ENCODE measurements at regions of chr16 and their contacts with region 1.

Region 1: DNA sequence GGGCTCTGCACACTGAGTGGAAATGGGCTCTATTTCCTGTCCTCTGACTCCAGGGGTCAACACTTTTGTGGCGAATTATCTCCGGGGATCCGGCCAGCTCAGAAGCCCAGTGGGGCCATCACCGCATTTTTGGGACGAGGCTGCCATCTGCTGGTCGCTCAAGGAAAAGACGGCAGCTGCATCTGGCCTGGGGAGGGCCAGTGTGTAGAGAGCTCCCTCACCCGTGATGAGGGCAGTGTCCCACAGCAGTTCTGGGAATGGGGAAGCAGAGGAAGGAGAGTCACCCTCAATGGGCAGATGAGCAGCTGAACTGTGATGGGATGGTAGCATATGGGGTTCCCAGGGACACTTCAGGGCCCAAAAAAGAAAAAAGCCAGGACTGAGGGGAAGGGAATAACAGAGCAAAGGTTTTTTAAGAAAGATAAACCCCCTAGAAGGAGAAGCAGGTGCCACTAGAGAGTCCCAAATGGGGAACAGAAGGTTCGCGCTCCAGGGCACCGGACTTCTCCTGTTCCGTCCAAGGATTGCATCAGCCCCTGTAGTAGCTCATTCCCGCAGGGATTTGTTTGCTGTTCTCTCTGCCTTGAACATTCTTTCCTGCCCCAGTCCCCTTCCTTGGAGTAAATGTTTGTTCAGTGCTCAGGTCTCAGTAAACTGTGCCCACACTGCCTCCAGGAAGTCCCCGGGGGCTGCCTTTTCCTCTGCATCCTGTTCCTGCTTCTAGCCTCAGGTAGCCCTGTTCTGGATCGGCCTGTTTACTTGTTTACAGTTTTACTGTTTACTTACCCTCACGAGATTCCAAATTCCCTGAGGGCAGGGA is 9.3 kb upstream of the ABCC12 start:
- DNase-seq: peak; percentile 75
- H3K4me3 ChIP-seq: no peak overlapping the region
- H3K27ac ChIP-seq: no peak overlapping the region
- H3K4me1 ChIP-seq: no peaks in the 10 kb centered on the region
- H3K27me3 ChIP-seq: no peaks in the 10 kb centered on the region

Region 2: DNA sequence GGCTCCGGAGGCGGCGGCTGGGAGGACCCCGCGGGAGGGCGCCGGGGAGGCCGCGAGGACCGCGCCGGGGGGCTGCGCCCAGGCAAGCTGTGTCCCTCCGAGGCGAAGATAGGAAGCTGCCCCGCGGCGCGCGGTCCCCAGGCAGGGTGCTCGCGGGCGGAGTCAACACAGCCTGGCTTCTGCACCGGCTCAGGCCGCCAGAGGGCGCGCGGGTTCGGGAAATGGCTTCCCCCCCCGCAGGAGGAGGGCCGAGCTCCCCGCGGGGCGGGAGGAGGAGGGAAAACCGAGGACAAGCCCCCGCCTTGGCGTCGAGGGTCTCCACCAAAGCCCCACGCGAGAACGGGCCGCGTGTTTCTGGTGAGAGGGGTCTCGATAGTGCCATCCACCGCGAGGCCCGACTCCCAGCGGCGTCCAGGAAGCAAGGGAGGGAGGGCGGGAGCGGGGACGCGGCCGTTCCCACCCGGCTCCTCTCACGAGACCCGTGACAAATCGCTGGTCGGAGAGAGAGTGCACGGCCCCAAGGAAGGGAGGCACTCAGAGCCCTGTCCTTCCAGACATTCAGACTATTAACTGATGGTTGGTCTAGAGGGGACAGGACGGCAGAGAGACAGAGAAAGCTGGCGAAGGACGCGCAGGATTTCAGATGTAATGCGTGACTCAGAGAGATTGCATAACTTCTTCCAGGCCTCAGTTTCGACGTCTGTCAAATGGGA is 1127.2 kb before region 1 on chr16:
- in situ Hi-C with region 1: loop called (anchors 10 kb)
- DNase-seq: peak; percentile 90
- H3K4me3 ChIP-seq: peak overlapping the region; percentile 75
- H3K27ac ChIP-seq: no peak overlapping the region
- H3K4me1 ChIP-seq: no peaks in the 10 kb centered on the region
- H3K27me3 ChIP-seq: no peaks in the 10 kb centered on the region

Region 3: DNA sequence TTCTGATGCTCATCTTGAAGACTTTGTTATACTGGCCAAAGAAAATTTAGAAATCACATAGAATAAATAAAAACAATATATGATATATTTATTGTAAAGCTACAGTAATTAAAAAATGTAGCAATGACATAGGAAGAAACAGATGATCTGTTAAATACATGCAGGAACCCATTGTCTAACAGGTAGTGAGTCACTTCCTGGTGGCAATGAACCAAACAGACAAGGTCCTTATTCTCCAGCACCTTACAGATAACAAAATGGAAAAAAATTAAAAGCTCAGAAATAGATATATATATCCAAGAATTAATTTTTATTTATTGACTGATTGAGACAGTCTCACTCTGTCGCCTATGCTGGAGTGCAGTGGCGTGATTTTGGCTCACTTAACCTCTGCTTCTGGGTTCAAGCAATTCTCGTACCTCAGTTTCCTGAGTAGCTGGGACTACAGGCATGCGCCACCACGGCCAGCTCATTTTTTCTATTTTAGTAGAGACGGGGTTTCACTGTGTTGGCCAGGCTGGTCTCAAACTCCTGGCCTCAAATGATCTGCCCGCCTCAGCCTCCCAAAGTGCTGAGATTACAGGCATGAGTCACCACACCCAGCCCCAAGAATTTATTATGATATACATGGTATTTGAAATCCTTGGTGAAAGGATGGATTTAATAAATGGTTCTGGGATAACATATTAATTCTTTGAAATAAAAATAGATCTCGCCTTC is 1028.9 kb before region 1 on chr16:
- in situ Hi-C with region 1: loop called (anchors 10 kb)
- DNase-seq: peak; percentile 16
- H3K4me3 ChIP-seq: no peak overlapping the region
- H3K27ac ChIP-seq: no peak overlapping the region
- H3K4me1 ChIP-seq: peaks cover 7% of the 10 kb centered on the region
- H3K27me3 ChIP-seq: no peaks in the 10 kb centered on the region

Region 4: GRCh38 chr16:47475786-47476185 is 689.3 kb before region 1 on chr16:
- in situ Hi-C with region 1: no loop called
- DNase-seq: peak; percentile 33
- H3K4me3 ChIP-seq: no peak overlapping the region
- H3K27ac ChIP-seq: no peak overlapping the region
- H3K4me1 ChIP-seq: peaks cover 15% of the 10 kb centered on the region
- H3K27me3 ChIP-seq: no peaks in the 10 kb centered on the region

Region 5: DNA sequence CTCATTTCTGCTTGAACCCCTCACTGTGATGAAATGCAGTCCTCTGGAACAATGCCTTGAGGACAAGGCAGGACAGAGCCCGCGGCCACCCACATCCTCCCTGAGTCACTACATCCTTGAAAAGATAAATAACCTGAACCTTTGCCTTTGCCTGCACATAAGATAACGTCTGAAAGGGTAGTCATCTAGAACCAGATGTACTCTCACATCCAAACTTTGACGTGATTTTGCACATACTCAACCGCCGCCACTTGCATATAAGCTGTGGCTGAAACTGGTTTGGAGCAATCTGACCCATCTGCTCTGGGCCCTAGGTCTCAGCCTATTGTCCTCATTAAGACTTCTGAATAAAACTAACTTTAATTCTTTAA is 451.9 kb before region 1 on chr16:
- in situ Hi-C with region 1: no loop called
- DNase-seq: peak; percentile 67
- H3K4me3 ChIP-seq: no peak overlapping the region
- H3K27ac ChIP-seq: no peak overlapping the region
- H3K4me1 ChIP-seq: peaks cover 12% of the 10 kb centered on the region; the same call in 1 of the 2 replicates
- H3K27me3 ChIP-seq: no peaks in the 10 kb centered on the region

Region 6: DNA sequence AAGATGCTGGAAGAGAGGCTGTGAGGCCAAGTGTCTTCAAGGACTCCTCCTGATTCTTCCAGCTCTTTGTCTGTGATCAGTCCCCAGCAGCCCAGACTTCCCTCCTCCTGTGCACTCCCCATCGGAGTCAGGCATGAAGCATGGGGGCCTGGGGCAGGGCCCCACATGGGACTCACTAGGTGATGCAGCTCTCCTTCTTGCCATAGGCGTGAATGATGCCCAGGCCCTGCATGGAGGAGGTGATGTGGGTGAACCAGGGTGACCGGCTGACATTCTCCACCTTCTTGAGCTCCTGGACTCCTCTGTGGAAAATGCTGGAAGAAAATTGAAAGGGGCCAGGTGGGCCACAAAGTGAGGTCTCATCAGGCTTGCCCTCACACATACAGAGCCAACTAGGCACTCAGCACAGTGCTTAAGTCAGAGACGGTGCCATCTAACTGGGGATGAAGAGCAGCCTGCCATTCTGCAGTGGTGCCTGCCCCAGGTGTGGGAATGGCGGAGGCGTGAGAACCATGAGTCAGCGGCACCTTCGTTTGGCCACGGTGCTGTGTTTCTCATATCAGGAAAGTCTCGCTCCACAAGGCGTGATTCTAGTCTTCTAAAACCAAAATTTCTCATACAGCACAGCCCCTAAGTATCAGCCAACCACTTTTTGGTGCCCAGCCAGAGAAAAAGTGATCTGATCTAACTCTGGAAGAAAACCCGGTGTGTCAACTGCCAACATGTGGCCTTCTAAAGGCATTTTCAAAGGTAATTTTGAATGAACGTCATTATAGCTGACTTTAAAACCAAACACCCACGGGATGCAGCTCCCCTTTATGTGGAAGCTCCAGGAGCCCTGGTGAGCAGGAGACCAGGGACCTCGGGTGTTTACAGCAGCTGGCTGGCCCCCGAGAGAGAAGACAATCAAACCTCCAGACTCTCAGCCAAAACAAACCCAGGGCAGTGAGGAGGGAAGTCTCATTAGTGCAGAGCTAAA is 64.1 kb before region 1 on chr16:
- in situ Hi-C with region 1: no loop called
- DNase-seq: no peak
- H3K4me3 ChIP-seq: no peak overlapping the region
- H3K27ac ChIP-seq: no peak overlapping the region
- H3K4me1 ChIP-seq: no peaks in the 10 kb centered on the region
- H3K27me3 ChIP-seq: no peaks in the 10 kb centered on the region; the same call in 1 of the 2 replicates

Region 7: GRCh38 chr16:48462201-48462600 is 297.1 kb after region 1 on chr16:
- in situ Hi-C with region 1: no loop called
- DNase-seq: no peak
- H3K4me3 ChIP-seq: no peak overlapping the region
- H3K27ac ChIP-seq: no peak overlapping the region
- H3K4me1 ChIP-seq: peaks cover 9% of the 10 kb centered on the region
- H3K27me3 ChIP-seq: no peaks in the 10 kb centered on the region